Activated B cell treated with CpG ODN at 0.5 μM for 24 hours (primary cell): ENCODE measurements at regions of chr17 and their contacts with region 1.

Region 1: DNA sequence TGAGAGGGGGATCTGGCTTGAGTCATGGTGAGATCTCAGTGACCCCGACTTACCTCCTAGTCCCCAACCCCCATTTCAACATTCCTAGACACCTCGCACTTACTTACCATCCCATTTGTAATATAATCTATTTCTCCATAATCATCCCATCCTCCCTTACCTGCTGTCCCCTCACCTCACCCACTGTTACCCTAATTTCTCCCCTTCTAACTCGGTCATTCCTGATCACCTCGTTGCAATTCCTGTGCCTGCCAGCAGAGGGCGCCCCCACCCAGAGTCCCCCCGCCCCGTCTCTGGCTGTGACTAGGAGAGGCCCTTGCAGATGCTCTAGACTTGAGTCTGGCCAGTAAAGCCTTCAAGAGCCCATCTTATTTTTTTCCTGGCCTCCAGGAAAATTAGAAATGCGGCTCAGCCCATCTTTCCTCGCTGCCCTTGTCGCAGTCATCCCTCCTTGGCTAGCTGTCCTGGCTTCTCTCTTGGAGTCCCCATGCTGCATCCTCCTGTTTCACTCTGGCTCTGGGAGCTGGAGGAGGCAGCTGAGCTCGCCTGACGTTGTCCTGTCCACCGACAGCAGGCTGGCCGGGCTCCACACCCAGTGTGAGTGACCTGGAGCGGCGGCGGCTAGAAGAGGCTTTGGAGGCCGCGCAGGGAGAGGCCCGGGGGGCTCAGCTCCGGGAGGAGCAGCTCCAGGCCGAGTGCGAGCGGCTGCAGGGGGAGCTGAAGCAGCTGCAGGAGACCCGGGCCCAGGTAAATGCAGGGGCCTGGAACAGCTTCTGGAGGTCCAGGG is 5.0 kb downstream of the TBKBP1 start:
- DNase-seq: peak; percentile 69
- ATAC-seq: peak; percentile 36
- H3K4me3 Mint-ChIP-seq: no peak overlapping the region
- H3K27ac Mint-ChIP-seq: peak overlapping the region; percentile 56
- H3K4me1 Mint-ChIP-seq: peaks cover 49% of the 10 kb centered on the region
- H3K27me3 Mint-ChIP-seq: no peaks in the 10 kb centered on the region
- CTCF ChIP-seq: no peak

Region 2: GRCh38 chr17:47465165-47465564 is 233.8 kb before region 1 on chr17:
- CTCF ChIA-PET with region 1: no interaction called
- POLR2A ChIA-PET with region 1: interaction called, 10 read pairs
- intact Hi-C with region 1: no loop called
- DNase-seq: no peak
- ATAC-seq: no peak
- H3K4me3 Mint-ChIP-seq: no peak overlapping the region
- H3K27ac Mint-ChIP-seq: no peak overlapping the region
- H3K4me1 Mint-ChIP-seq: no peaks in the 10 kb centered on the region
- H3K27me3 Mint-ChIP-seq: no peaks in the 10 kb centered on the region
- CTCF ChIP-seq: no peak

Region 3: DNA sequence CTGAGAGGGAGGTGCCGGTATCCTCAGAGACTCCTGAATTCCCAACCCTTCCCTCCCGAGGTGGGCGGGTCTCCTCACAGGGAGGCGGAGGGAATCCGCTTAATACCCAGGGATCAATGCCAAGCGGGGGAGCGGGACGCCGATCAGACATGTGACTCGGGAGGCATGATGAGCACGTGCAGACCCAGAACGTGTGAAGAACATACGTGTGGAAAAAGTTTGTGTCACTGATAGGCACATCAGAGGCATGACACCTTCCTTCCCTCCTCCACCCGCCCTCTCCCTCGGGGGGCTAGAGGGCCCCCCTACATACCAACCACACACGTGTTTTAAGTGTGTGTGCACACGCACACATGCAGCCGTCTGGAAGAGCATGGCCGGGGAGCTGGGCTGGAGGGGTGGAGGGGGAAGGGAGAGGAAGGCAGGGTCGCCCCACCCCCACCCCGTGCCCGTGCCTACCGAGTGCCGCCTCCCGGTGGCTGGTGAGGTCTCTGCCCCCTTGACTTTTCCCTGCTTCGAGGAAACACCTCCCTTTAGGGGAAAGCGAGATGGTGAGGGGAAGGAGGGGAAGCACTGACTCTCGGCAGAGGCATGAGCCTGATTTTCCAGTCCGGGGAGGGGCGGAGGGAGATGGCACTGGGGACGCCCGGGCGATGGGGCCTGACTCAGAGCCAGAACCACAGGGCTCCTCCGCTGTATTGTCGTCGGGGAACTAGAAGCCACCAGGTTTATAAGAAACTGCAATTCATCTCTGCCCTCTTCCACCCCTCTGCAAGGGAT is 22.0 kb after region 1 on chr17:
- CTCF ChIA-PET with region 1: interaction called, 12 read pairs
- POLR2A ChIA-PET with region 1: interaction called, 15 read pairs
- intact Hi-C with region 1: loop called (anchors 1 kb)
- DNase-seq: peak; percentile 62
- ATAC-seq: peak; percentile 80
- H3K4me3 Mint-ChIP-seq: no peak overlapping the region
- H3K27ac Mint-ChIP-seq: peak overlapping the region; percentile 41
- H3K4me1 Mint-ChIP-seq: peaks cover 58% of the 10 kb centered on the region
- H3K27me3 Mint-ChIP-seq: peaks cover 15% of the 10 kb centered on the region
- CTCF ChIP-seq: no peak

Region 4: DNA sequence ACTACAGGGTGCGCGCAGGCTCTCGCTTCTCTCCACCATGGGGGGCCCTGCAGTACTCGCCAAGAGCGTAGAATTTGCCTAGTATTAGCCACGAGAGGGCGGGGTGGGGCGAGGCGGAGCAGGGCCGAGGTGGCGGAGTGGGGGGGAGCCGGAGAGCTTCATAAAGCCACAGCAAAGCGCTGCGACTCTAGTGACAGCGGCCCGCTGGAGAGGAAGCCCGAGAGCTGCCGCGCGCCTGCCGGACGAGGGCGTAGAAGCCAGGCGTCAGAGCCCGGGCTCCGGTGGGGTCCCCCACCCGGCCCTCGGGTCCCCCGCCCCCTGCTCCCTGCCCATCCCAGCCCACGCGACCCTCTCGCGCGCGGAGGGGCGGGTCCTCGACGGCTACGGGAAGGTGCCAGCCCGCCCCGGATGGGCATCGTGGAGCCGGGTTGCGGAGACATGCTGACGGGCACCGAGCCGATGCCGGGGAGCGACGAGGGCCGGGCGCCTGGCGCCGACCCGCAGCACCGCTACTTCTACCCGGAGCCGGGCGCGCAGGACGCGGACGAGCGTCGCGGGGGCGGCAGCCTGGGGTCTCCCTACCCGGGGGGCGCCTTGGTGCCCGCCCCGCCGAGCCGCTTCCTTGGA is 34.2 kb after region 1 on chr17 and contains the start of gene TBX21:
- CTCF ChIA-PET with region 1: interaction called, 64 read pairs
- POLR2A ChIA-PET with region 1: interaction called, 10 read pairs
- intact Hi-C with region 1: loop called (anchors 1 kb)
- DNase-seq: peak; percentile 79
- ATAC-seq: peak; percentile 91
- H3K4me3 Mint-ChIP-seq: peak within 1 kb of the TSS; percentile 94
- H3K27ac Mint-ChIP-seq: peak within 1 kb of the TSS; percentile 87
- H3K4me1 Mint-ChIP-seq: peaks cover 52% of the 10 kb centered on the region
- H3K27me3 Mint-ChIP-seq: peaks cover 2% of the 10 kb centered on the region
- CTCF ChIP-seq: peak; percentile 43
- total RNA-seq, gene TBX21: 3.6 and 3.8 TPM in 2 replicates

Region 5: GRCh38 chr17:47776330-47777197 is 77.6 kb after region 1 on chr17:
- CTCF ChIA-PET with region 1: no interaction called
- POLR2A ChIA-PET with region 1: no interaction called
- intact Hi-C with region 1: loop called (anchors 1 kb)
- DNase-seq: no peak
- ATAC-seq: peak; percentile 79
- H3K4me3 Mint-ChIP-seq: no peak overlapping the region
- H3K27ac Mint-ChIP-seq: no peak overlapping the region
- H3K4me1 Mint-ChIP-seq: no peaks in the 10 kb centered on the region
- H3K27me3 Mint-ChIP-seq: peaks cover 52% of the 10 kb centered on the region
- CTCF ChIP-seq: peak; percentile 41

Region 6: DNA sequence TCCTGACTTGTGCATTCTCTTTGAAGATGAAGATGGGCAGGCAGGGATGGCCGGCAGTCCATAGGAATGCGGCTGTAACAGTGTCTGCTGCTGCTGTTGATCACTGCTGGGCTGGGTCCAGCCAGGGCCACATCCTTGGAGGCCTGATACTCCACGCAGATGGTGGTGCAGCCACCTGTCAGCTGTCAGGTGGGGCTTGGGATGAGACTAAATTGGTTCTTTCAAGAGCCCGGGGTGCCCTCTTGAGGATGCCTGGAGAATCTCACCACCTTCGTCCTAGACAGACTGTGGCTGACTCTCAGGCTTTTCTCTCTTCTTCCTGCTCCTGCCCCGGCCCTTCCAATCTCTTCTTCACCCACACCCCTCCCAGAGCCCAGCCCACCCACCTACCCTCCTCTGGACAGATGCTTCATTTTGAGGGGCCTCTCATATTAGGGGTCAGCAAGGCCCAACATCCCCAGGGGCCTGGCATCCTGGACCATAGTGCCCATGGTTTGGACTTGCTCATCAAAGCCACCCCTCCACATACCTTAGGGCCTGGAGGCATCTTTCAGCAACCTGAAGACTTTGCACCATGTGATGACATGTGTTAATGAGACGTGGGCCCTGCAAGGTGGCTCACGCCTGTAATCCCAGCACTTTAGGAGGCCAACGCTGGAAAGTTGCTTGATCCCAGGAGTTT is 103.5 kb after region 1 on chr17:
- CTCF ChIA-PET with region 1: interaction called, 8 read pairs
- POLR2A ChIA-PET with region 1: no interaction called
- intact Hi-C with region 1: loop called (anchors 1 kb)
- DNase-seq: peak; percentile 32
- ATAC-seq: peak; percentile 83
- H3K4me3 Mint-ChIP-seq: no peak overlapping the region
- H3K27ac Mint-ChIP-seq: no peak overlapping the region
- H3K4me1 Mint-ChIP-seq: no peaks in the 10 kb centered on the region
- H3K27me3 Mint-ChIP-seq: peaks cover 4% of the 10 kb centered on the region
- CTCF ChIP-seq: no peak